AG04450 (cell line): ENCODE measurements at regions of chr12 and their contacts with region 1.

Region 1: GRCh38 chr12:32644431-32644830 is 34.7 kb upstream of the DNM1L start:
- DNase-seq: no peak
- H3K4me3 ChIP-seq: no peak overlapping the region
- H3K27ac ChIP-seq: no peak overlapping the region
- H3K27me3 ChIP-seq: no peaks in the 10 kb centered on the region
- CTCF ChIP-seq: no peak

Region 2: DNA sequence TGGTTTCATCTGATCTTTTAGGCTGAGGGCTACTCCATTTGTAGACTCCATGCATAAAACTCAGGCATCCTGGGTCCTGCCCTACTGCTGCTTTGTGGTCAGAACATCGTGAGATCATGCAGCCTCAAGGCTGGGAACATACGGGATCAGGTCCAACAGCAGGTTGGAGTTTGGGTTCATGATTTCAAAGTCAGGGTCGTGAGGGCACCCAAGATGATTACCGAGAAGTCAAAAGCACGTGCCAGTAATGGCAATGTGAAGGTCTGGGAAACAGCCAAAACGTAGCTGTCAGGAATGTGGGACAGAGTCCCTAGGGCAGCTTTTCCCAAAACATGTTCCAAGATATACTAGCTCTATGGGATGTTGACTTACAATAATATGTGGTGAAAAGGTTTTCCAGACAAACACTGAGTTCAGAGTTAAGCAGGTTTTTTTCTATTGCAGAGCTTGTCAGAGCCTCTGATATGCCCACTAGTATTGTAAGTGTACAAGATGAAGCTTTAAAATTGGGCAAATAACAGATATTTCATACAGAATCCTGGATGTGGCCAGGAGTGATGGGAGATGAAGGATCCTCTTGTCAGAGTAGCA is 95.6 kb before region 1 on chr12:
- CTCF ChIA-PET with region 1: no interaction called
- POLR2A ChIA-PET with region 1: no interaction called
- DNase-seq: no peak
- H3K4me3 ChIP-seq: no peak overlapping the region
- H3K27ac ChIP-seq: peak overlapping the region; percentile 41
- H3K27me3 ChIP-seq: no peaks in the 10 kb centered on the region
- CTCF ChIP-seq: no peak

Region 3: GRCh38 chr12:32611986-32612385 is 32.4 kb before region 1 on chr12:
- CTCF ChIA-PET with region 1: no interaction called
- POLR2A ChIA-PET with region 1: no interaction called
- DNase-seq: no peak
- H3K4me3 ChIP-seq: no peak overlapping the region
- H3K27ac ChIP-seq: no peak overlapping the region
- H3K27me3 ChIP-seq: no peaks in the 10 kb centered on the region
- CTCF ChIP-seq: no peak

Region 4: GRCh38 chr12:32659908-32660440 is 15.5 kb after region 1 on chr12:
- CTCF ChIA-PET with region 1: interaction called, 13 read pairs
- POLR2A ChIA-PET with region 1: no interaction called
- DNase-seq: no peak
- H3K4me3 ChIP-seq: no peak overlapping the region
- H3K27ac ChIP-seq: no peak overlapping the region
- H3K27me3 ChIP-seq: no peaks in the 10 kb centered on the region
- CTCF ChIP-seq: no peak